Thyroid gland (tissue), 4 donors: ENCODE measurements at regions of chrX and their contacts with region 1.

Region 1: DNA sequence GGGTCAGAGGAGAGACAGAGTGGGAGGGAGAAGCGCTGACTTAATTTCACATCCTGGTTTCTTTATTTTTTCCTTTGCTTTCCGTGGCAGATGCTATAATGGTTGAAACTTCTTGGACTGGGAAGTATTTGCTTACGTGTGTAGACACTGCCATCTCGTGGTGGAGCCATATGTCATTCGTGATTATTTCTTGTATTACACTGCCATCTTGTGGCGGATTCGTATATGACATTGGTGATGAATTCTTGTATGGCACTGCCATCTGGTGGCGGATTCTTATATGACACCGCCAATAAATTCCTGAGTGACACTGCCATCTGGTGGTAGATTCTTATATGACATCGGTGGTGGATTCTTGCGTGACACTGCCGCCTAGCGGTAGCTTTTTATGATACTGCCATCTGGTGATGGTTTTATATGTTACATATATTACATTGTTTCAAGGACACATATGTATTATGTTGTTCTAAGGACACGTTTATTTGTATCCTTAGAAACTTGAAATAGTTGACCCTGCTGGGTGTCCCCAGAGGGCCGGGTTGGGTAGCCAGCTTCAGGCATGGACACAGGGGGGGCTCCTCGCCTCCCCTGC is 37.3 kb upstream of the CLCN4 start:
- DNase-seq: peak; percentile 58 to 60
- H3K4me3 ChIP-seq: no peak overlapping the region
- H3K27ac ChIP-seq: no peak overlapping the region
- H3K4me1 ChIP-seq: no peaks in the 10 kb centered on the region
- H3K27me3 ChIP-seq: no peaks in the 10 kb centered on the region
- CTCF ChIP-seq: peak; percentile 89 to 100 (median 100)
- POLR2A ChIP-seq: no peak

Region 2: GRCh38 chrX:9785944-9786797 is 333.3 kb before region 1 on chrX and contains the start of gene SHROOM2:
- intact Hi-C with region 1: loop called (anchors 10 kb)
- DNase-seq: peak; percentile 45 to 47
- H3K4me3 ChIP-seq: peak within 1 kb of the TSS in 1 of 3 donors; percentile 37
- H3K27ac ChIP-seq: no peak within 1 kb of the TSS
- H3K4me1 ChIP-seq: peaks cover 9 to 13% of the 10 kb centered on the region in 2 donors
- H3K27me3 ChIP-seq: no peaks in the 10 kb centered on the region
- CTCF ChIP-seq: no peak
- POLR2A ChIP-seq: peak in 1 of 2 donors; percentile 31
- total RNA-seq, gene SHROOM2: 2.8 to 16.5 (median 6.1) TPM

Region 3: GRCh38 chrX:9995855-9996339 is 123.6 kb before region 1 on chrX:
- intact Hi-C with region 1: loop called (anchors 5 kb)
- DNase-seq: peak; percentile 79 to 80
- H3K4me3 ChIP-seq: no peak overlapping the region
- H3K27ac ChIP-seq: no peak overlapping the region
- H3K4me1 ChIP-seq: no peaks in the 10 kb centered on the region
- H3K27me3 ChIP-seq: no peaks in the 10 kb centered on the region
- CTCF ChIP-seq: peak; percentile 75 to 99 (median 88)
- POLR2A ChIP-seq: no peak